Astrocyte of the cerebellum (primary cell): ENCODE measurements at regions of chr11 and their contacts with region 1.

Region 1: DNA sequence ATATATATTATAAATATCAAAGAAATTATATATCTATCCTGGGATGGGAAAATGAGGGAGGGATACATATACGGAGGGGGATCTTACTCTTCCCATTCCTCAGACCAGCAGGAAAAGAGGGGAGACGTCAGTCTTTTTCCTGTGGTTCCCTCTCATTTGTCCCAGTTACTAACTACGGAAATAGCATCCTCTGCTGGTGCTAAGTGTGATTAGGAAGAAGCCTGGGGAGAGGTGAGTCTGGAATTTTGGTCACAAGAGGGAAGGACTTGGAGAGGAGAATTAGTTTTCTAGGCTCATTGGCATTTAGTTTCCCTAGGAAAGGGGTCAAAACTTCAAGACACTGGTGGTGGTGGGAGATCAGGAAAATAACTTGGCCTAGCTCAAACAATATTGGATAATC is 11.6 kb downstream of the MED19 start:
- DNase-seq: no peak
- H3K4me3 ChIP-seq: no peak overlapping the region
- CTCF ChIP-seq: no peak

Region 2: GRCh38 chr11:57657194-57658022 is 43.0 kb before region 1 on chr11 and contains the start of gene CLP1:
- in situ Hi-C with region 1: no loop called
- DNase-seq: peak; percentile 96
- H3K4me3 ChIP-seq: peak within 1 kb of the TSS; percentile 93
- CTCF ChIP-seq: no peak

Region 3: DNA sequence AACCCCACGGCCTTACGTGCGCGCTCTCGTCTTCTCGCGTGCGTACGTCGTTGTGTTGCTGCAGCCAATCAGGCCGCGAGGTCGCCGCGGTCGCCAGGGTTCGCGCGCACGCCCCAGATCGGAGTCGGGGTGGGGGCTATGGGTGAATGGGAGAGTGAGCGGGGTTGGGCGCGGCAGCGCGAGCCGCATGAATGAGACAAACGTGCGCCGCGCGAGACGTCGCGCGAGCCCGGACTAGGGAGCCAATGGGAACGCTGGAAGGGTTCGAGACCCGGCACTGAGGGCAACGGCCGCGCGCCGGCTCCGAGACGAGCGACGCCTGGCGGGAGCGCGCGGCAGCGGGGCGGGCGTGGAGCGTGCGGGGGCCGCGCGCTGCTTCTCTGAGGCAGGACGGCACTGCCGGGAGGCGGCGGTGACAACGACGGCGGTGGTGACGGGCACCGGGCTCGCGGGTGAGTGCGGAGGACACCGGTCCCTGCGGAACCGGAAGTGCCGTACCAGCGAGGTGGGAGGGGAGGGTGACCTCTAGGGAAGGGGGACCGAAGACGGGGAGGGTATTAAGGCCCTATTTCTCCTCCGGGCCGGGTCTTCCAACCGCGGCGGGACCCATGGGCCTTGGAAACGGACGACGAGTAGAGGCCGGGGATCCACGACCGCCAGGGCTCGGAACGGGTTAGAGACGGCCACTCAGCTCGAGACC is 32.5 kb before region 1 on chr11 and contains the start of gene ZDHHC5:
- in situ Hi-C with region 1: loop called (anchors 5 kb)
- DNase-seq: peak; percentile 99
- H3K4me3 ChIP-seq: peak within 1 kb of the TSS; percentile 93
- CTCF ChIP-seq: peak; percentile 37